Mammary epithelial cell (primary cell): ENCODE measurements at regions of chr1 and their contacts with region 1.

Region 1: GRCh38 chr1:45410850-45411314 is 70.6 kb upstream of the MUTYH start:
- DNase-seq: peak; percentile 63
- H3K4me3 ChIP-seq: no peak overlapping the region
- H3K27ac ChIP-seq: no peak overlapping the region
- H3K4me1 ChIP-seq: no peaks in the 10 kb centered on the region
- H3K27me3 ChIP-seq: no peaks in the 10 kb centered on the region
- CTCF ChIP-seq: no peak

Region 2: DNA sequence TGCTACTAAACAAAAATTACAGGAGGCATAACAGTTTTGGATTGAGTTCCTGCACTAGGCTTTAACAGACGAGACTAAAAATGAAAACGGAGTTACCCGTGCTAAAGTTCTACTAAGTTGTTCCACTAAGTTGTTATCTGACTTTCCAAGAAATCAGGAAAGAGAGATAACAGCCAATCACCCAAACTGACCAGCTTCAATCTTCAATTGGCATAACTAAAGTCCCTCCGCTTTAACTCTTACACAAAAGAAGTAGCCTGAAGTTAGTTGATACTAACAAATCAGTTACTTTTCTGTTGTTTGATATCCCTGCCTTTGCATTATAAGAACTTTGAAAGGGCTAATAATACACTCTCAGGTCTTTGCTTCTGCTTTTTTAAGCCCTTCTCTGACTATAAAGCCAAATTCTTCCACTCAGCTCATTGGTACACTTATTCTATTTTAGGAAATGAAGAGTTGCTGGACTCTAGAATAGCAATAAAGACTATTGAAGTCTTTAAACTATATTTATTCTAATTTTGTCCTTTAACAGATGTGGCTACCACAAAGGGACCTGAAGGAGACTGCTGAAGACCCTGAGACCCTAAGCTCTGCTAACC is 18.8 kb after region 1 on chr1:
- CTCF ChIA-PET with region 1: interaction called, 21 read pairs
- dilution Hi-C with region 1: no loop called
- in situ Hi-C with region 1: no loop called
- intact Hi-C with region 1: no loop called
- DNase-seq: no peak
- H3K4me3 ChIP-seq: no peak overlapping the region
- H3K27ac ChIP-seq: no peak overlapping the region
- H3K4me1 ChIP-seq: no peaks in the 10 kb centered on the region
- H3K27me3 ChIP-seq: no peaks in the 10 kb centered on the region
- CTCF ChIP-seq: no peak

Region 3: GRCh38 chr1:45478121-45478814 is 67.4 kb after region 1 on chr1:
- CTCF ChIA-PET with region 1: no interaction called
- dilution Hi-C with region 1: no loop called
- in situ Hi-C with region 1: no loop called
- intact Hi-C with region 1: no loop called
- DNase-seq: no peak
- H3K4me3 ChIP-seq: no peak overlapping the region
- H3K27ac ChIP-seq: no peak overlapping the region
- H3K4me1 ChIP-seq: no peaks in the 10 kb centered on the region
- H3K27me3 ChIP-seq: no peaks in the 10 kb centered on the region
- CTCF ChIP-seq: no peak

Region 4: GRCh38 chr1:45521398-45522323 is 110.8 kb after region 1 on chr1 and contains the start of gene PRDX1:
- CTCF ChIA-PET with region 1: no interaction called
- dilution Hi-C with region 1: no loop called
- in situ Hi-C with region 1: no loop called
- intact Hi-C with region 1: no loop called
- DNase-seq: peak; percentile 97
- H3K4me3 ChIP-seq: peak within 1 kb of the TSS; percentile 85 to 96 (median 87)
- H3K27ac ChIP-seq: peak within 1 kb of the TSS; percentile 87
- H3K4me1 ChIP-seq: peaks cover 16% of the 10 kb centered on the region
- H3K27me3 ChIP-seq: no peaks in the 10 kb centered on the region
- CTCF ChIP-seq: peak; percentile 6 to 12
- total RNA-seq, gene PRDX1: 273 to 406 TPM